ENCODE measurements at regions of chr9 and their contacts with region 1.

Region 1: GRCh38 chr9:36407122-36407723 is 7.2 kb upstream of the RNF38 start:
- DNase-seq: peak in 1 of 2 donors; percentile 28
- ATAC-seq: peak; percentile 72 to 88 (median 80)
- H3K4me3 ChIP-seq: no peak overlapping the region
- H3K27ac ChIP-seq: peak overlapping the region in 1 of 10 donors; percentile 28
- H3K4me1 ChIP-seq: peaks cover 0 to 19% (median 0%) of the 10 kb centered on the region in 9 donors
- H3K27me3 ChIP-seq: no peaks in the 10 kb centered on the region
- CTCF ChIP-seq: peak; percentile 87 to 98 (median 92)

Region 2: GRCh38 chr9:36341936-36342577 is 65.2 kb before region 1 on chr9:
- intact Hi-C with region 1: no loop called
- DNase-seq: no peak
- ATAC-seq: no peak
- H3K4me3 ChIP-seq: no peak overlapping the region
- H3K27ac ChIP-seq: no peak overlapping the region
- H3K4me1 ChIP-seq: peaks cover 0 to 14% (median 0%) of the 10 kb centered on the region in 9 donors
- H3K27me3 ChIP-seq: no peaks in the 10 kb centered on the region
- CTCF ChIP-seq: no peak

Region 3: GRCh38 chr9:36441966-36442365 is 34.7 kb after region 1 on chr9:
- intact Hi-C with region 1: loop called in 5 of 10 experiments (anchors 5 kb)
- DNase-seq: no peak
- ATAC-seq: no peak
- H3K4me3 ChIP-seq: no peak overlapping the region
- H3K27ac ChIP-seq: no peak overlapping the region
- H3K4me1 ChIP-seq: peaks cover 0 to 45% (median 19%) of the 10 kb centered on the region in 9 donors
- H3K27me3 ChIP-seq: no peaks in the 10 kb centered on the region
- CTCF ChIP-seq: no peak

Region 4: DNA sequence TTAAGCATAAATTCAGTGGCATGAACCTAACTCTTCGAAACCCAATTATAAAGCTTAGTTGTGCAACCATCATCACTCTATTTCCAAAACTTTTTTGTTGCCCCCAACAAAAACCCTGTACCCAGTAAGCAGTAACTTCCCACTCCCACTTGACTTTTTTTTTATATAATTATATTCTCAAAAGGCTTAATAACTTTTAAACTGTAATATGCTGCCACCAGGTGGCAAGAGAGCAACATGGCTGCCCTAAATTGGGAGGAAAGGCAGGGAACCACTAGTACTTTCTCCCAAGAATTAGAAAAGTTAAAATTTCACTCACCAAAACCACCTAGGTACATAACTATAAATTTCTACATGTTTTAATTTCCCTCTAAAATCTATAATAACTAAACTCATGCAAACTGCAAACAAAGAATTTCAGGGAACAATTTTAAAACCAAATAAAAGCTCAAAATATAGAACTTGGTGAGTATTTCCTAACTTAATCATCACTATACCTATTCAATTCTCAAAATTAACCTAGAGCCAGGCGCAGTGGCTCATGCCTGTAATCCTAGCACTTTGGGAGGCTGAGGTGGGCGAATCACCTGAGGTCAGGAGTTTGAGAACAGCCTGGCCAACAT is 43.0 kb after region 1 on chr9:
- intact Hi-C with region 1: loop called in 9 of 10 experiments (anchors 1 to 5 kb)
- DNase-seq: peak in 1 of 2 donors; percentile 18
- ATAC-seq: peak in 3 of 8 donors; percentile 43 to 51 (median 45)
- H3K4me3 ChIP-seq: no peak overlapping the region
- H3K27ac ChIP-seq: no peak overlapping the region
- H3K4me1 ChIP-seq: peaks cover 0 to 37% (median 9%) of the 10 kb centered on the region in 9 donors
- H3K27me3 ChIP-seq: no peaks in the 10 kb centered on the region
- CTCF ChIP-seq: peak; percentile 50 to 80 (median 71)

Region 5: GRCh38 chr9:36551129-36551528 is 143.9 kb after region 1 on chr9:
- intact Hi-C with region 1: loop called (anchors 1 to 5 kb)
- DNase-seq: no peak
- ATAC-seq: no peak
- H3K4me3 ChIP-seq: no peak overlapping the region
- H3K27ac ChIP-seq: no peak overlapping the region
- H3K4me1 ChIP-seq: no peaks in the 10 kb centered on the region
- H3K27me3 ChIP-seq: peaks cover 0 to 5% (median 0%) of the 10 kb centered on the region in 7 donors
- CTCF ChIP-seq: no peak

Region 6: GRCh38 chr9:36560857-36561221 is 153.6 kb after region 1 on chr9:
- intact Hi-C with region 1: loop called in 9 of 10 experiments (anchors 1 to 5 kb)
- DNase-seq: no peak
- ATAC-seq: no peak
- H3K4me3 ChIP-seq: no peak overlapping the region
- H3K27ac ChIP-seq: no peak overlapping the region
- H3K4me1 ChIP-seq: peaks cover 0 to 10% (median 0%) of the 10 kb centered on the region in 9 donors
- H3K27me3 ChIP-seq: no peaks in the 10 kb centered on the region
- CTCF ChIP-seq: no peak

Region 7: GRCh38 chr9:36572515-36573418 is 165.5 kb after region 1 on chr9 and contains the start of gene MELK:
- intact Hi-C with region 1: loop called in 1 of 10 experiments (anchors 5 kb)
- DNase-seq: peak; percentile 72 to 84
- ATAC-seq: peak; percentile 95 to 99 (median 97)
- H3K4me3 ChIP-seq: peak within 1 kb of the TSS; percentile 51 to 98 (median 82)
- H3K27ac ChIP-seq: peak within 1 kb of the TSS in 8 of 10 donors; percentile 5 to 89 (median 68)
- H3K4me1 ChIP-seq: peaks cover 0 to 17% (median 12%) of the 10 kb centered on the region in 9 donors
- H3K27me3 ChIP-seq: no peaks in the 10 kb centered on the region
- CTCF ChIP-seq: no peak
- total RNA-seq, gene MELK: 0.16 to 3.1 (median 0.48) TPM in 6 of 10 donors, not detected in the others